ENCODE measurements at regions of chr20 and their contacts with region 1.

Region 1: GRCh38 chr20:44187051-44187762 is at the start of gene JPH2:
- DNase-seq: no peak
- ATAC-seq: no peak
- H3K4me3 ChIP-seq: no peak within 1 kb of the TSS
- H3K4me3 Mint-ChIP-seq: peak within 1 kb of the TSS in 9 of 10 donors; percentile 38 to 75 (median 47)
- H3K27ac ChIP-seq: no peak within 1 kb of the TSS
- H3K27ac Mint-ChIP-seq: no peak within 1 kb of the TSS
- H3K4me1 ChIP-seq: peaks cover 0 to 11% of the 10 kb centered on the region in 2 donors
- H3K4me1 Mint-ChIP-seq: peaks cover 4 to 19% (median 12%) of the 10 kb centered on the region in 7 donors
- H3K27me3 ChIP-seq: peaks cover 0 to 12% of the 10 kb centered on the region in 2 donors
- H3K27me3 Mint-ChIP-seq: peaks cover 55 to 71% (median 66%) of the 10 kb centered on the region in 5 donors
- total RNA-seq, gene JPH2: 0.07 to 0.17 TPM in 2 of 5 experiments, not detected in the others

Region 2: GRCh38 chr20:44056010-44056698 is 131.1 kb before region 1 on chr20:
- CTCF ChIA-PET with region 1: no interaction called
- POLR2A ChIA-PET with region 1: interaction called, 3 read pairs
- intact Hi-C with region 1: loop called in 1 of 2 experiments (anchors 1 kb)
- DNase-seq: peak in 8 of 9 donors; percentile 41 to 83 (median 74)
- ATAC-seq: peak; percentile 96
- H3K4me3 ChIP-seq: no peak overlapping the region
- H3K4me3 Mint-ChIP-seq: no peak overlapping the region
- H3K27ac ChIP-seq: no peak overlapping the region
- H3K27ac Mint-ChIP-seq: peak overlapping the region in 7 of 9 donors; percentile 6 to 85 (median 33)
- H3K4me1 ChIP-seq: peaks cover 0 to 9% of the 10 kb centered on the region in 2 donors
- H3K4me1 Mint-ChIP-seq: peaks cover 10 to 49% (median 30%) of the 10 kb centered on the region in 7 donors
- H3K27me3 ChIP-seq: no peaks in the 10 kb centered on the region
- H3K27me3 Mint-ChIP-seq: peaks cover 0 to 19% (median 0%) of the 10 kb centered on the region in 5 donors

Region 3: GRCh38 chr20:44223721-44224120 is 36.5 kb after region 1 on chr20:
- CTCF ChIA-PET with region 1: no interaction called
- POLR2A ChIA-PET with region 1: no interaction called
- intact Hi-C with region 1: no loop called
- DNase-seq: no peak
- ATAC-seq: no peak
- H3K4me3 ChIP-seq: no peak overlapping the region
- H3K4me3 Mint-ChIP-seq: no peak overlapping the region
- H3K27ac ChIP-seq: no peak overlapping the region
- H3K27ac Mint-ChIP-seq: peak overlapping the region in 6 of 9 donors; percentile 45 to 94 (median 91)
- H3K4me1 ChIP-seq: peaks cover 11 to 21% of the 10 kb centered on the region in 2 donors
- H3K4me1 Mint-ChIP-seq: peaks cover 15 to 45% (median 36%) of the 10 kb centered on the region in 7 donors
- H3K27me3 ChIP-seq: no peaks in the 10 kb centered on the region
- H3K27me3 Mint-ChIP-seq: no peaks in the 10 kb centered on the region